ENCODE measurements at regions of chr16 and their contacts with region 1.

Region 1: DNA sequence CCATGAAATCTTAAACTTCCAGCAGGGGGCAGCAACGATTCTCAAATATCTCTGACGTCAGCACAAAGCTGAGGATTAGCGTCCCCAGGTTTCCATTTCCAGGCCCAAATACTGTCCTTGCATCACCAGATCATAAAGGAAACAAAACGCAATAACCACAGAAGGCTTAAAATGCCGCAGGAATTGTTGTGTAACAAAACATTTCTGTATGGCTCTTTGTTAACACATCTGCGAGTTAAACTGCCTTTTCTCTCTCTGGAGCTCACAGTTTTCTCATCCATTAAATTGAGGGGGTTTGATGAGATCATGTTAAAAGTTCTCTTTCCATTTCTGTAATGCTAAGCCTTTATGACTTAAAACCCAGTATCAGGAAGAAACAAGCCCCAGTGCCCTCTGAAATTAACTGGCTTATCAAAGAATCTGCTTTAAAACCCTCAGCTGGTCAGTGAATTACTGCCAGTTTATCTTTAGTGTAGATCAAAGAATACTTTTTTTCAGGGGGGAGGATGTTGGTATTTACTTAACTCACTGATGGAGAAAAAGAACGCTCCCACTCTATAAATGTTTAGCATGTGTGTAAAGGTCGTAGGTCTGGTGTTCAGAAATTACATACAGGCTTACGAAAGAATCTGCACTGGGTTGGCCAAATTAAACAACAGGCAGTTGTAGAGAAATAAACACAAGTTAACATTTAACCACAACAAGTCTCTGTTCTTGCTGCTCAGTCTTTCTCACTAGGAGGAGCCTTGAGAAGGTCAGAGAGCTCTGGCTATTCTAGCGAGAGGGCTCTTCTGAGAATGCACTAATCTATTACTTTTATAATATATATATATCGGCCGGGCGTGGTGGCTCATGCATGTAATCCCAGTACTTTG is 10.6 kb upstream of the TERF2 start:
- DNase-seq: peak in 1 of 2 experiments; percentile 80
- H3K4me3 ChIP-seq: no peak overlapping the region
- H3K27ac ChIP-seq: no peak overlapping the region
- H3K4me1 ChIP-seq: peaks cover 0 to 2% (median under 1%) of the 10 kb centered on the region in 4 experiments; a peak in 2 of 7 replicates
- H3K27me3 ChIP-seq: no peaks in the 10 kb centered on the region
- CTCF ChIP-seq: peak in 2 of 3 experiments; percentile 52 to 62; a peak in 3 of 4 replicates
- EP300 ChIP-seq: no peak
- POLR2A ChIP-seq: no peak
- RAD21 ChIP-seq: peak; percentile 56 to 64

Region 2: GRCh38 chr16:69204172-69204571 is 192.3 kb before region 1 on chr16:
- CTCF ChIA-PET with region 1: no interaction called
- POLR2A ChIA-PET with region 1: no interaction called
- DNase-seq: no peak
- H3K4me3 ChIP-seq: no peak overlapping the region
- H3K27ac ChIP-seq: no peak overlapping the region
- H3K4me1 ChIP-seq: no peaks in the 10 kb centered on the region
- H3K27me3 ChIP-seq: no peaks in the 10 kb centered on the region
- CTCF ChIP-seq: no peak
- EP300 ChIP-seq: no peak
- POLR2A ChIP-seq: no peak
- RAD21 ChIP-seq: no peak

Region 3: GRCh38 chr16:69240331-69240730 is 156.1 kb before region 1 on chr16:
- CTCF ChIA-PET with region 1: no interaction called
- POLR2A ChIA-PET with region 1: no interaction called
- DNase-seq: no peak
- H3K4me3 ChIP-seq: no peak overlapping the region
- H3K27ac ChIP-seq: no peak overlapping the region
- H3K4me1 ChIP-seq: no peaks in the 10 kb centered on the region
- H3K27me3 ChIP-seq: no peaks in the 10 kb centered on the region
- CTCF ChIP-seq: no peak
- EP300 ChIP-seq: no peak
- POLR2A ChIP-seq: no peak
- RAD21 ChIP-seq: no peak

Region 4: DNA sequence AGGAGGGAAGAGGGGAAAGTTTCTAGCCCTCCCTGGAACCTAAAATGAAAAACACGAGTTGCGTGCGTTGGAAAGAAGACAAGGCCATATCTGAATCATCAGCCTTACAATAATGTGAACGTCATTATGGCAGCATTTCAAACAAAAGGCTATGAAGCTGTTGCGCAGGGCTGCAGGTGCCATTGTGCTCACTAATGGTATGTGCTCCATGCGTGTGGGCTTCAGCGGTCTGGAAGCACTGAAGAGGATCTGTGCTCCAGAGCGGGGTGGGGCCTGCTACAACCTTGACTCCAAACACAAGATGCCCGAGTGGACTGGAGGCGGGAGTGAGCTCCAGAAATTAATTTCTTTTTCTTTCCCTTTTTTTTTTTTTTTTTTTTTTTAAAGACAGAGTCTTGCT is 15.9 kb after region 1 on chr16:
- CTCF ChIA-PET with region 1: interaction called, 18 read pairs
- POLR2A ChIA-PET with region 1: interaction called, 3 read pairs
- DNase-seq: no peak
- H3K4me3 ChIP-seq: no peak overlapping the region
- H3K27ac ChIP-seq: no peak overlapping the region
- H3K4me1 ChIP-seq: no peaks in the 10 kb centered on the region
- H3K27me3 ChIP-seq: no peaks in the 10 kb centered on the region
- CTCF ChIP-seq: no peak
- EP300 ChIP-seq: no peak
- POLR2A ChIP-seq: no peak
- RAD21 ChIP-seq: no peak

Region 5: GRCh38 chr16:69593751-69594255 is 197.4 kb after region 1 on chr16:
- CTCF ChIA-PET with region 1: interaction called, 10 read pairs
- POLR2A ChIA-PET with region 1: no interaction called
- DNase-seq: no peak
- H3K4me3 ChIP-seq: no peak overlapping the region
- H3K27ac ChIP-seq: no peak overlapping the region
- H3K4me1 ChIP-seq: no peaks in the 10 kb centered on the region
- H3K27me3 ChIP-seq: no peaks in the 10 kb centered on the region
- CTCF ChIP-seq: no peak
- EP300 ChIP-seq: no peak
- POLR2A ChIP-seq: no peak
- RAD21 ChIP-seq: no peak